ENCODE measurements at regions of chr20 and their contacts with region 1.

Region 1: GRCh38 chr20:20989081-20989480 is 117.1 kb downstream of the LINC00237 start:
- DNase-seq: no peak
- H3K4me3 ChIP-seq: no peak overlapping the region
- CTCF ChIP-seq: no peak
- POLR2A ChIP-seq: no peak

Region 2: GRCh38 chr20:21956591-21956990 is 967.5 kb after region 1 on chr20:
- intact Hi-C with region 1: no loop called
- DNase-seq: no peak
- H3K4me3 ChIP-seq: no peak overlapping the region
- CTCF ChIP-seq: no peak
- POLR2A ChIP-seq: no peak

Region 3: GRCh38 chr20:22921595-22922421 is 1932.7 kb after region 1 on chr20:
- intact Hi-C with region 1: loop called (anchors 5 kb)
- DNase-seq: no peak
- H3K4me3 ChIP-seq: no peak overlapping the region
- CTCF ChIP-seq: no peak
- POLR2A ChIP-seq: no peak